Endothelial cell of umbilical vein (primary cell): ENCODE measurements at regions of chr3 and their contacts with region 1.

Region 1: DNA sequence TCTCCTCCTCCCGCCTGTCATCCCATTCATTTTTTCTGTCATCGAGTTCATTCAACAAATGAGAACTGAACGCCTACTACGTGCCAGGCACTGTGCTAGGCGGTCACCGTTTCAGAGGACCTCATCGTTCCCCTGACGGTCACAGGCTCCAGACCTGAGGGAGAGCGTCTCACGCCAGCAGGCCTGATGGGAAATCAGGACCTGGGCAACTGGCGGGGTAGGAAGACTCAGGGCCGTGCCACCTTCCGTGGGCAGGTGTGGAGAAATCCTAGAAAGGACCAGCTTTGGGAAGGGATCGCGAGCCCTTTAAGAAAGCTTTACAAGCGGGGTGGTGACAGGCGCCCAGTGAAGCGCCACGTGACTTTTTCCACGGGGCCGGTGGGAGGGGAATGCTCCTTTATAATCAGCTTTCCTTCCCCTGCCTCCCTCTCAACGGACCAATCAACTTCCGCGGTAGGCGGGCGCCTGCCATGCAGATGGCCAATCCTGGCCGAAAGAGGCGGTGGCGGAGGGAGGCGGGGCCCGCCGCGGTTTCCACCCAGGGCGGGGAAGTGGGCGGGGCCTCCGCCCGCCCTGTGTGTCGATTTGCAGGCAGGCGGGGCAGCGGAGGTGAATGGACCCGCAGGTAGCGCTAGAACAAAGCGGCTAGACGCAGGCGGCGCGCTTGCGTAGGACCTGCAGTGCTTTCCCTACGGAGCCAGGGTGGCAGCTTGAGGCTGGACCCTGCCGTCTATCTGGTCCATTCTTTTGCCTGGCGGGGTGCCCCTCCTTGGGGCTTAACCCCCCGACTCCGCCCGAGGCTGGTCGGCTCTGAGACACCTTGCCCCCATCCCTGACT is 816 bp upstream of the DUSP7 start:
- DNase-seq: peak; percentile 99
- H3K4me3 ChIP-seq: peak overlapping the region; percentile 38 to 78 (median 39)
- H3K27ac ChIP-seq: peak overlapping the region; percentile 23
- H3K4me1 ChIP-seq: peaks cover 34% of the 10 kb centered on the region
- H3K27me3 ChIP-seq: no peaks in the 10 kb centered on the region
- CTCF ChIP-seq: no peak
- POLR2A ChIP-seq: peak; percentile 29

Region 2: GRCh38 chr3:51995346-51996163 is 61.6 kb before region 1 on chr3 and contains the start of gene RPL29:
- CTCF ChIA-PET with region 1: interaction called, 260 read pairs
- POLR2A ChIA-PET with region 1: interaction called, 10 read pairs
- dilution Hi-C with region 1: no loop called
- intact Hi-C with region 1: no loop called
- DNase-seq: peak; percentile 96
- H3K4me3 ChIP-seq: peak within 1 kb of the TSS; percentile 67 to 96 (median 91)
- H3K27ac ChIP-seq: peak within 1 kb of the TSS; percentile 89
- H3K4me1 ChIP-seq: peaks cover 19% of the 10 kb centered on the region
- H3K27me3 ChIP-seq: no peaks in the 10 kb centered on the region
- CTCF ChIP-seq: no peak
- POLR2A ChIP-seq: peak; percentile 97
- total RNA-seq, gene RPL29: 1,127 and 1,236 TPM in 2 replicates

Region 3: GRCh38 chr3:52032702-52033408 is 24.3 kb before region 1 on chr3:
- CTCF ChIA-PET with region 1: interaction called, 43 read pairs
- POLR2A ChIA-PET with region 1: no interaction called
- dilution Hi-C with region 1: no loop called
- intact Hi-C with region 1: no loop called
- DNase-seq: no peak
- H3K4me3 ChIP-seq: no peak overlapping the region
- H3K27ac ChIP-seq: no peak overlapping the region
- H3K4me1 ChIP-seq: no peaks in the 10 kb centered on the region
- H3K27me3 ChIP-seq: no peaks in the 10 kb centered on the region
- CTCF ChIP-seq: no peak
- POLR2A ChIP-seq: no peak

Region 4: GRCh38 chr3:52070724-52071621 is 13.8 kb after region 1 on chr3:
- CTCF ChIA-PET with region 1: interaction called, 19 read pairs
- POLR2A ChIA-PET with region 1: no interaction called
- dilution Hi-C with region 1: no loop called
- intact Hi-C with region 1: no loop called
- DNase-seq: peak; percentile 57
- H3K4me3 ChIP-seq: no peak overlapping the region
- H3K27ac ChIP-seq: no peak overlapping the region
- H3K4me1 ChIP-seq: peaks cover 15% of the 10 kb centered on the region
- H3K27me3 ChIP-seq: no peaks in the 10 kb centered on the region
- CTCF ChIP-seq: no peak
- POLR2A ChIP-seq: no peak

Region 5: GRCh38 chr3:52123106-52123725 is 66.0 kb after region 1 on chr3:
- CTCF ChIA-PET with region 1: interaction called, 180 read pairs
- POLR2A ChIA-PET with region 1: no interaction called
- dilution Hi-C with region 1: no loop called
- intact Hi-C with region 1: loop called (anchors 1 kb)
- DNase-seq: peak; percentile 81
- H3K4me3 ChIP-seq: no peak overlapping the region
- H3K27ac ChIP-seq: no peak overlapping the region
- H3K4me1 ChIP-seq: peaks cover 16% of the 10 kb centered on the region
- H3K27me3 ChIP-seq: no peaks in the 10 kb centered on the region
- CTCF ChIP-seq: peak; percentile 97 to 98
- POLR2A ChIP-seq: no peak